Colonic mucosa (tissue), 4 donors: ENCODE measurements at regions of chr16 and their contacts with region 1.

Region 1: DNA sequence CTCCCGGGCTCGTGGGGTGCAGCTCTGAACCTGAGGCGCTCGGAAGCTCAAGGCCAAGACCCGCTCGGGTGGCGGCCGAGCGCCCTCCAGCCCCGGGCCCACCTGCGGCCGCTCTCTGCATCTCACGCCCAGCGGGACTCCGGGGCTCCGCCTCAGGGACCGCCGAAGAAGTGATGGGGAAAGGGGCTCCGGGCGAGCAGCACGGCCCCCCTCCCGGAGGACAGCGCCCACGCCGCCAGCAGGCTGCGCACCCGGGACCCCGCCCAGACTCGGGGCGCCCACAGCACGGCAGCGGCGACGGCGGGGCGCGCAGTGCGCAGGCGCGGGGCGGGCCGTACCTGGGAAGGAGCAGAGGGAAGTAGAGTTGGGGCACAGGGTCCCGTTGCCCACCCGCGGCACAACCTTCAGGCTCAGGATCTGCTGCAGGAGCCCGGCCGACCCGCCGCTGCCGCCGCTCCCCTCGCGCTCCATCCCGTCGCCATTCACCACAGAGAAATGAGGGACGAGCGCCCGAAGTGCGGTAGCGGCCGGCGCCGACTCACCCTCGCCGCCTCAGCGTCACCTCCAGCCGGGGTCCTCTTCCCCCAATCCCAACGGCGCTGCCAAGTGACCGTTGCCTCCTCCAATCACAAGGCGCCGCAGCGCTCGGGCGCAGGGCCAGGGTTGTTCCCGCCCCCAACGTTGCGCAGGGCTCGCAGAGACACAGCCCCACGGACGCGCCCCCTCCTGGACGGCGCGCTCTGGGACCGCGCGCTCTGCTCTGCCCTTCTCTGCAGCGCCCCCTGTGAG is at the start of gene TMEM170A:
- DNase-seq: peak; percentile 100
- H3K4me3 ChIP-seq: peak within 1 kb of the TSS; percentile 90
- H3K27ac ChIP-seq: peak within 1 kb of the TSS; percentile 97
- H3K4me1 ChIP-seq: peaks cover 12% of the 10 kb centered on the region
- H3K27me3 ChIP-seq: no peaks in the 10 kb centered on the region
- CTCF ChIP-seq: peak; percentile 100
- total RNA-seq, gene TMEM170A: 39.7 to 50.9 TPM

Region 2: GRCh38 chr16:75402821-75403475 is 61.4 kb before region 1 on chr16:
- intact Hi-C with region 1: no loop called
- DNase-seq: no peak
- H3K4me3 ChIP-seq: no peak overlapping the region
- H3K27ac ChIP-seq: peak overlapping the region; percentile 72
- H3K4me1 ChIP-seq: no peaks in the 10 kb centered on the region
- H3K27me3 ChIP-seq: no peaks in the 10 kb centered on the region
- CTCF ChIP-seq: peak; percentile 49

Region 3: GRCh38 chr16:75555707-75556430 is 91.5 kb after region 1 on chr16 and contains the start of gene TMEM231:
- intact Hi-C with region 1: loop called (anchors 5 kb)
- DNase-seq: peak; percentile 99
- H3K4me3 ChIP-seq: peak within 1 kb of the TSS; percentile 68
- H3K27ac ChIP-seq: peak within 1 kb of the TSS; percentile 53
- H3K4me1 ChIP-seq: no peaks in the 10 kb centered on the region
- H3K27me3 ChIP-seq: no peaks in the 10 kb centered on the region
- CTCF ChIP-seq: no peak
- total RNA-seq, gene TMEM231: 4.7 to 6.3 TPM